Upper lobe of right lung (tissue), 1 donor: ENCODE measurements at regions of chr16 and their contacts with region 1.

Region 1: GRCh38 chr16:8892101-8892575 is 10.0 kb downstream of the LITAFD start:
- DNase-seq: peak; percentile 39
- ATAC-seq: no peak
- H3K4me3 ChIP-seq: no peak overlapping the region
- H3K27ac ChIP-seq: no peak overlapping the region
- H3K4me1 ChIP-seq: no peaks in the 10 kb centered on the region
- H3K27me3 ChIP-seq: no peaks in the 10 kb centered on the region
- CTCF ChIP-seq: no peak

Region 2: DNA sequence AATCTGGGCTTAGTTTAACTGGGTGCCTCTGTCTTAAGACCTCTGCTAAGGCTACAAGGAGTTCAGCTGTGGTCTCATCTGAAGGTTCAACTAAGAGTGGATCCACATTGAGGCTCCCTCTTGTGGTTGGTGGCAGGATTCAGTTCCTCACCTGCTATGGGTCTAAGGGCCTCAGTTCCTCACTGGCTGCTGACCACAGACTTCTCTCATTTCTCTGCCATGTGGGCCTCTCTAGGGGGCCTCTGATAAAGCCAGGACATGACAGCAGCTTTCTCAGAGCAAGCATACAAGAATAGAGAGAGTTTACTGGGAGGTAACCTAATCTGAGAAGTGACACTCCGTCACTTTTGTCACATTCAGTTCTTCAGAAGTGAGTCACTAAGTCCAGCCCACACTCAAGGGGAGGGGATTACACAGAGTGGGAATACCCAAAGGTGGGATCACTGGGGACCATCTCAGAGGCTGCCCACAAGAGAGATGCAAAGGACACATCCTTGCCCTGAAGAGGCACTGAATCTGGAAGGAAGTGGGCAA is 236.9 kb before region 1 on chr16:
- intact Hi-C with region 1: loop called (anchors 5 kb)
- DNase-seq: no peak
- ATAC-seq: peak; percentile 91
- H3K4me3 ChIP-seq: no peak overlapping the region
- H3K27ac ChIP-seq: no peak overlapping the region
- H3K4me1 ChIP-seq: no peaks in the 10 kb centered on the region
- H3K27me3 ChIP-seq: no peaks in the 10 kb centered on the region
- CTCF ChIP-seq: peak; percentile 50